Calu3 (cell line): ENCODE measurements at regions of chr7 and their contacts with region 1.

Region 1: DNA sequence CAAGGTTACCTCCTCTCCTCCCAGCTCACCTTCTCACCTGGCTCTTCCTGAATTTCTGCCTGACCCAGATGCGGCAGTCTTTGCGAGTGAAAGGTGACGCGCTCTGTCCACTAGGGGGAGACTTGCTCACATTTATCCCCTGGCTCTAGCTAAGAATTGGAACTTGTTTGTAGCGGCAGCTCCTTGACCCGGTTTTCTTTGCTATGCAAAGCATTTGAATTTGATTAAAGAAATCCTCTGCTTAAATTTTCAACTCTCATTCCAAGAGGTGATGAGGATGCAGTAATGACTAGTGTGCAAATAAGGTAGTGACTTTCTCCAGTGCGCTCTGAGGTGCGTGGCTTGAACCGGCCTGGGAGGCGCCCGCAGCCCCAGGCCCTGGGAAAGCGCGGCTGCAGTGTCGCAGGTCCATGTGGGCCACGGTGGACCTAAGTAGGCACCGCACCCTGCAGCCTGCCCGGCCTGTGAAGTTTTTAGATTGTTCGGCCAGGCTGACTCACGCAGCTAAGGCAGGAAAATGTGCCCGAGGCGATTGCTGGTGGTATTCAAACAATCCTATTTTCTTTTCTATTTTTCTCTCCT is 336.9 kb upstream of the NPSR1 start:
- DNase-seq: peak; percentile 83
- H3K4me3 Mint-ChIP-seq: peak overlapping the region; percentile 56
- H3K27ac Mint-ChIP-seq: peak overlapping the region; percentile 40
- H3K4me1 Mint-ChIP-seq: peaks cover 15% of the 10 kb centered on the region
- H3K27me3 Mint-ChIP-seq: no peaks in the 10 kb centered on the region
- CTCF ChIP-seq: peak; percentile 97

Region 2: DNA sequence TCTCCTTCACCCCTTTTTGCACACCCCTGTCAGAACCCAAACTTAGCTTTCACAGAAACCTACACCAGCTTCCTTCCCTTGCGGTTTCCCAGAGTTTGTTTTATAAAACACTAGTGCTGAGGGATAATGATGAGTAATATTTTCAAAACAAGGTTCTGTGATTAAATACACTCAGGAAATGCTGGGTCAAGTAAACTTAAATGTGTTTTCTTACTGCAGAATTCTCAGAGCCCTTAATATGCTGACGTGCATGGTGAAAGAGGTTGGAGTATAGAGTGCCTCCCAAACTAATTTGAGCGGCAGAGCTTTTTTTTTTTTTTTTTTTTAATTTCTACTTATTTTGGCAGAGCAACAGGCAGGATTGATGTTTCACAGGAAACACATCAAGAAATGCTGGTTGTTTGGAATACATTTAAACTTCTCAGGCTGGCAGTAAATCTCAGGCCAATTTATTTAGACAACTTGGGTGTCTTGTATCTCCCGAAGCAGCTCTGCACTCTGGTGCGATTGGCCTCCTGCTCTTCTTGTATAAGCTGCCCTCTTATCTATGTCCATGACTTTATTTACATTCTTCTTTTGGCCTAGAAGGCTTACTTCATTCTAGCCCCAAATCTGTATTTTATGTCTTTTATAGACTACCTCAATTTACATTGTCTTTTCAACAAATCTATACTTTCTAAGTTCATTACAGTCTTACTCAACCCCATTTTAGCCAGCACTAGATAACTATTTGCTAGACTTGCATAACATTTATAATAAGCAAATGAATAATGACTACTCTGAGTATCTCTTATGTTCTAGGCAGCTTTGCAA is 250.4 kb before region 1 on chr7:
- CTCF ChIA-PET with region 1: no interaction called
- intact Hi-C with region 1: no loop called
- DNase-seq: no peak
- H3K4me3 Mint-ChIP-seq: peak overlapping the region; percentile 6
- H3K27ac Mint-ChIP-seq: peak overlapping the region; percentile 43
- H3K4me1 Mint-ChIP-seq: peaks cover 45% of the 10 kb centered on the region
- H3K27me3 Mint-ChIP-seq: no peaks in the 10 kb centered on the region
- CTCF ChIP-seq: no peak

Region 3: DNA sequence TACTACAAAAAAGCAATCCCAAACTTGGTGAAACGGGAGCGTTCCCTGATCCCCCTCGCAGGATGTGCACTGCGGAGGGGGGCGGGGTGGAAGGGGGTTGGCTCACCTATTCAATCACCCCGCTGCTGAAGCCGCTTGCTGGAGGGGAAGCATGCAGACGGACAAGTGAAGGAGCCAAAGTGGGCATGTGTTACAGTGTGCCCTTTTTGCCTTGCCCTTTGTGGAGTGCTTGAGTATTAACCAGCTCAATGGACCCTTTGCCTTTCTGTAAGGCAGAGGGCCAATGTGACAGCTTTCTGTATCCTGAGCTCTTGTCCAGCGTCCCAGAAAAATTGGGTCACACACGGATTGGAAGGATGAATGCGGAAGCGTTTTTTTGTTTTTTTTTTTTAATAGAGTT is 12.0 kb before region 1 on chr7:
- CTCF ChIA-PET with region 1: no interaction called
- intact Hi-C with region 1: no loop called
- DNase-seq: no peak
- H3K4me3 Mint-ChIP-seq: no peak overlapping the region
- H3K27ac Mint-ChIP-seq: no peak overlapping the region
- H3K4me1 Mint-ChIP-seq: no peaks in the 10 kb centered on the region
- H3K27me3 Mint-ChIP-seq: peaks cover 10% of the 10 kb centered on the region
- CTCF ChIP-seq: no peak

Region 4: DNA sequence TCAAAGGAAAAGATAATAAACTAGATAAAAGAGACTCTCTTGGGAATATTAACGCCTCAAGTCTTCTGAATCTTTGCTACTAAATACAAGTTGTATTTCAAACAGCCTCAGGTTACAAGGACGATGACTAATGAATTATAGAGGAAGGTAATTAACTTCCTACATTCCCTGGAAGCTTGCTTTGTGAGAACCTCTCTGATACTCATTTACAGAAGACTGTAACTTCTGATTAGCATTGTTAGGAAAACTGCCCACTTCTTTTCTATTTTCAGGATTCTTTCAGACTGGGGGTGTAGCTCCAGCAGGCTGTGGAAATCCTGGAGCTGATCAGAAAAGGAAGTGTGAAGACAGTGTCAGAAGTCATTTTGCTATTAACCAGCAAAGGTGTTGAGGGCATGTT is 20.2 kb after region 1 on chr7:
- CTCF ChIA-PET with region 1: interaction called, 16 read pairs
- intact Hi-C with region 1: no loop called
- DNase-seq: peak; percentile 17
- H3K4me3 Mint-ChIP-seq: peak overlapping the region; percentile 40
- H3K27ac Mint-ChIP-seq: peak overlapping the region; percentile 90
- H3K4me1 Mint-ChIP-seq: peaks cover 38% of the 10 kb centered on the region
- H3K27me3 Mint-ChIP-seq: no peaks in the 10 kb centered on the region
- CTCF ChIP-seq: no peak

Region 5: GRCh38 chr7:34385390-34385789 is 64.3 kb after region 1 on chr7:
- CTCF ChIA-PET with region 1: no interaction called
- intact Hi-C with region 1: no loop called
- DNase-seq: no peak
- H3K4me3 Mint-ChIP-seq: no peak overlapping the region
- H3K27ac Mint-ChIP-seq: no peak overlapping the region
- H3K4me1 Mint-ChIP-seq: no peaks in the 10 kb centered on the region
- H3K27me3 Mint-ChIP-seq: no peaks in the 10 kb centered on the region
- CTCF ChIP-seq: no peak

Region 6: GRCh38 chr7:34596892-34597291 is 275.8 kb after region 1 on chr7:
- CTCF ChIA-PET with region 1: interaction called, 42 read pairs
- intact Hi-C with region 1: loop called (anchors 1 kb)
- DNase-seq: peak; percentile 40
- H3K4me3 Mint-ChIP-seq: no peak overlapping the region
- H3K27ac Mint-ChIP-seq: no peak overlapping the region
- H3K4me1 Mint-ChIP-seq: no peaks in the 10 kb centered on the region
- H3K27me3 Mint-ChIP-seq: no peaks in the 10 kb centered on the region
- CTCF ChIP-seq: peak; percentile 65

Region 7: DNA sequence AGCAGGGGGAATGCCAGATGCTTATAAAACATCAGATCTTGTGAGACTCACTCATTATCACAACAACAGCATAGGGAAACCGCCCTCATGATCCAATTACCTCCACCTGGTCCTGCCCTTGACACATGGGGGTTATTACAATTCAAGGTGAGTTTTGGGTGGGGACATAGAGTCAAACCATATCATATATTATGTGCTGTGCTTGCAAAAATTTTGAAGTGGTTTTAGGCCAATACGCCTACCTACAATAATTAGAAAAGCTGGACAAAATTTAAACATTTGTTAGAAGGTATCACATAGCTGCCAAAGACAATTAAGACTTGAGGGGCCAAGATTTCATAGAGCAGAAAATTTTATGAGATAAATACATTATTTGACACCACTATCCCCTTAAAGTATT is 366.4 kb after region 1 on chr7:
- CTCF ChIA-PET with region 1: no interaction called
- intact Hi-C with region 1: no loop called
- DNase-seq: no peak
- H3K4me3 Mint-ChIP-seq: no peak overlapping the region
- H3K27ac Mint-ChIP-seq: no peak overlapping the region
- H3K4me1 Mint-ChIP-seq: no peaks in the 10 kb centered on the region
- H3K27me3 Mint-ChIP-seq: no peaks in the 10 kb centered on the region
- CTCF ChIP-seq: no peak